A549 (cell line): ENCODE measurements at regions of chrX and their contacts with region 1.

Region 1: GRCh38 chrX:103211012-103211715 is 3.7 kb upstream of the BEX4 start:
- DNase-seq: peak; percentile 12 to 34
- ATAC-seq: peak; percentile 58 to 80; a peak in 3 of 6 replicates
- H3K4me3 ChIP-seq: no peak overlapping the region
- H3K27ac ChIP-seq: no peak overlapping the region
- H3K4me1 ChIP-seq: no peaks in the 10 kb centered on the region
- CTCF ChIP-seq: peak; percentile 60
- EP300 ChIP-seq: no peak
- POLR2A ChIP-seq: no peak
- RAD21 ChIP-seq: peak; percentile 35 to 42; a peak in 3 of 5 replicates

Region 2: DNA sequence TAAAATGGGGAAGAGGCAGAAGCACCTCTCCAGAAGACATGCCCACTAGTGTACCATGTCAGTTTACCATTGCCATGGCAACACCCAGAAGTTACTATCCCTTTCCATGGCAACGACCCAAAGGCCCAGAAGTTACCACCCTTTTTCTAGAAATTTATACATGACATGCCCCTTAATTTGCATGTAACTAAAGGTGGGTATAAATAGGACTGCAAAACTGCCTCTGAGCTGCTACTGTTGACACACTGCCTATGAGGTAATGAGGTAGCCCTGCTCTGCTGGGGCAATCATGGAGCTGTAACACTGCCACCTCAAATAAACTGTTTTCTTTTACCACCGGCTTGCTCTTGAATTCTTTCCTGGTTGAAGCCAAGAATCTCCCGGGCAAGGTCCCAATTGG is 10.1 kb before region 1 on chrX:
- CTCF ChIA-PET with region 1: interaction called, 12 read pairs
- POLR2A ChIA-PET with region 1: no interaction called
- DNase-seq: no peak
- ATAC-seq: no peak
- H3K4me3 ChIP-seq: no peak overlapping the region
- H3K27ac ChIP-seq: no peak overlapping the region
- H3K4me1 ChIP-seq: no peaks in the 10 kb centered on the region
- CTCF ChIP-seq: no peak
- EP300 ChIP-seq: no peak
- POLR2A ChIP-seq: no peak
- RAD21 ChIP-seq: no peak

Region 3: DNA sequence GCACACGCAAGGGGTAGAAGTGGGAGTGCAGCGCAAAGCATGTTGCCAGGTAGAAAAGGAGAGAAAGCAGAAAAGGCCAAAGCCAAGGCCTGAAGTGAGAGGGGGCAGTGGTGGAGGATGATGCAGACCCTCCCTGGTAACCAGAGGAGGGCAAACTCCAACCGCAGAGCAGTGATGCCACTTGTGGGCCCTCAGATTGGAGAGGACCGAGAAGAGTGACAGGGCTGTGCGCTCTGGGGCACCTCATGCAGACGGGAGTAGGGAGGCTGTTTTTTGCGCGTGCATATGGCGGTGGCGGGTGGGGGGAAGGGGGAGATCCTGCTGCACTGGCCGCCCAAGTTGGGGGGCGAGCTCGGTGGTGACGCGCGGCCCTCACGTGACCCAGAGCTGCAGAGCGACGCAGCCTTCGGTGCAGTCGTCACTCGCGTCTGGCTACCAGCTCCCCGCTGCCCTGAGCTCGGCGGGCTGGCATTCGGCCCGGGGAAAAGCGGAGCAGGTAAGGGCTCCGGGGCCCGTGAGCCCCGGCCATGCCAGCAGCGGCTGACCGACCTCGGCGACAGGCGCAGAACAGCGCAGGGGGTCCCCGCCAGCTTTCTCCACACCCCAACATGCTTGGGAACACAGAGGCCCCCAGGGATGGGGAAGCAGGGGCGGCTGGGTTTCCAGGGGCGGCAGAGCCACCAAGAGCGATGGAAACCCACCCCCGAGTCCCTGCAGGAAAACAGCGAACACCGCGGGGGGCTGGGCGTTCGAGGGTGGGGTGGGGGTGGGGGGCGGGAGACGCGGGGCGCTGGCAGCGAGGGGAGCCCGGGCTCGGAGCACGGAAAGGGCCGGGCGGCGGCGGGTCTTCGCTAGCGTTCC is 165.2 kb after region 1 on chrX and contains the start of gene BEX3:
- CTCF ChIA-PET with region 1: no interaction called
- POLR2A ChIA-PET with region 1: no interaction called
- DNase-seq: peak; percentile 48 to 69
- ATAC-seq: peak; percentile 82 to 86
- H3K4me3 ChIP-seq: peak within 1 kb of the TSS; percentile 67
- H3K27ac ChIP-seq: peak within 1 kb of the TSS; percentile 97 to 100
- H3K4me1 ChIP-seq: peaks cover 36% of the 10 kb centered on the region
- CTCF ChIP-seq: no peak
- EP300 ChIP-seq: no peak
- POLR2A ChIP-seq: peak; percentile 70
- RAD21 ChIP-seq: no peak
- polyA plus RNA-seq, gene BEX3: 328 and 404 TPM in 2 replicates